PC-3 (cell line): ENCODE measurements at regions of chr14 and their contacts with region 1.

Region 1: GRCh38 chr14:43312782-43313181 is 1194.3 kb downstream of the FSCB start:
- DNase-seq: no peak
- ATAC-seq: no peak
- H3K4me3 ChIP-seq: no peak overlapping the region
- H3K27ac ChIP-seq: no peak overlapping the region; the same call in 1 of the 2 replicates
- H3K4me1 ChIP-seq: peaks cover 21% of the 10 kb centered on the region
- H3K27me3 ChIP-seq: no peaks in the 10 kb centered on the region
- CTCF ChIP-seq: no peak

Region 2: DNA sequence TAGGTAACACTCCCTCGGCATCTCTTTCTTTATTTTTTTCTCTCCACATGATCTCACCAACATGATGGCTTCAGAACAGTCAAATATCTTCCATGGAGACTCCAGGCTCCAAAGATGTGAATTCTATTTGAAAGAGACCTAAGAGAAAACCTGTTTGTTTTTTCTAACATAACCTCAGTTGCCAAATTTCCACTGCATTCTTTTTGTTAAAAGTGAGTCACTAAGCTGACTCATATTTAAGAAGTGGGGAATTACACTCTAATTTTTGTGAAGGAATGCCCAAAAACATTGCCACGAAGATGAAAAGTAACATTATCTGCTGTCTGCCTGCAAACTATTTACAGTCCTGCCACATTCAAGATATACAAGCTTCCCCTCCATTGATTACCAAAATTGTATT is 368.5 kb before region 1 on chr14:
- CTCF ChIA-PET with region 1: no interaction called
- POLR2A ChIA-PET with region 1: no interaction called
- intact Hi-C with region 1: loop called (anchors 10 kb)
- DNase-seq: peak; percentile 66
- ATAC-seq: peak; percentile 91
- H3K4me3 ChIP-seq: no peak overlapping the region
- H3K27ac ChIP-seq: 0 out of 2 replicates have a peak overlapping the region, but pooled peaks have one; percentile 7
- H3K4me1 ChIP-seq: peaks cover 14% of the 10 kb centered on the region
- H3K27me3 ChIP-seq: no peaks in the 10 kb centered on the region
- CTCF ChIP-seq: no peak